GM12878 (cell line): ENCODE measurements at regions of chr1 and their contacts with region 1.

Region 1: GRCh38 chr1:55284852-55285251 is 69.7 kb upstream of the USP24 start:
- DNase-seq: peak; percentile 5
- ATAC-seq: no peak
- H3K4me3 ChIP-seq: no peak overlapping the region
- H3K27ac ChIP-seq: no peak overlapping the region
- H3K4me1 ChIP-seq: peaks cover 18% of the 10 kb centered on the region
- H3K27me3 ChIP-seq: no peaks in the 10 kb centered on the region; a peak in 1 of 4 replicates
- CTCF ChIP-seq: peak; percentile 43 to 53 (median 49); a peak in 5 of 6 replicates
- EP300 ChIP-seq: no peak
- POLR2A ChIP-seq: no peak
- RAD21 ChIP-seq: peak; percentile 81

Region 2: GRCh38 chr1:55337801-55338447 is 53.1 kb after region 1 on chr1:
- CTCF ChIA-PET with region 1: interaction called, 138 read pairs
- POLR2A ChIA-PET with region 1: no interaction called
- RAD21 ChIA-PET with region 1: interaction called, 29 read pairs
- SMC1A ChIA-PET with region 1: interaction called, 40 read pairs
- in situ Hi-C with region 1: no loop called
- intact Hi-C with region 1: loop called (anchors 1 kb)
- DNase-seq: peak; percentile 13
- ATAC-seq: peak; percentile 95
- H3K4me3 ChIP-seq: no peak overlapping the region
- H3K27ac ChIP-seq: no peak overlapping the region
- H3K4me1 ChIP-seq: no peaks in the 10 kb centered on the region
- H3K27me3 ChIP-seq: peaks cover 0 to 1% of the 10 kb centered on the region in 2 experiments; a peak in 1 of 4 replicates
- CTCF ChIP-seq: peak; percentile 57 to 62 (median 57)
- EP300 ChIP-seq: no peak
- POLR2A ChIP-seq: no peak
- RAD21 ChIP-seq: peak; percentile 69

Region 3: GRCh38 chr1:55478742-55479141 is 193.9 kb after region 1 on chr1:
- CTCF ChIA-PET with region 1: interaction called, 7 read pairs
- POLR2A ChIA-PET with region 1: no interaction called
- RAD21 ChIA-PET with region 1: interaction called, 4 read pairs
- SMC1A ChIA-PET with region 1: interaction called, 3 read pairs
- in situ Hi-C with region 1: no loop called
- intact Hi-C with region 1: loop called (anchors 10 kb)
- DNase-seq: no peak
- ATAC-seq: peak; percentile 69
- H3K4me3 ChIP-seq: no peak overlapping the region
- H3K27ac ChIP-seq: no peak overlapping the region
- H3K4me1 ChIP-seq: no peaks in the 10 kb centered on the region
- H3K27me3 ChIP-seq: 0 out of 4 replicates have a peak, but pooled peaks cover 0 to 1% of the 10 kb centered on the region in 2 experiments
- CTCF ChIP-seq: peak in 2 of 3 experiments; percentile 7 to 34; a peak in 2 of 6 replicates
- EP300 ChIP-seq: no peak
- POLR2A ChIP-seq: no peak
- RAD21 ChIP-seq: no peak

Region 4: GRCh38 chr1:56709269-56709880 is 1424.5 kb after region 1 on chr1:
- CTCF ChIA-PET with region 1: interaction called, 13 read pairs
- POLR2A ChIA-PET with region 1: no interaction called
- RAD21 ChIA-PET with region 1: interaction called, 4 read pairs
- SMC1A ChIA-PET with region 1: interaction called, 8 read pairs
- in situ Hi-C with region 1: loop called (anchors 5 kb)
- intact Hi-C with region 1: loop called (anchors 2 kb)
- DNase-seq: no peak
- ATAC-seq: peak; percentile 85
- H3K4me3 ChIP-seq: no peak overlapping the region
- H3K27ac ChIP-seq: no peak overlapping the region
- H3K4me1 ChIP-seq: no peaks in the 10 kb centered on the region
- H3K27me3 ChIP-seq: no peaks in the 10 kb centered on the region
- CTCF ChIP-seq: peak; percentile 33 to 57 (median 44); a peak in 4 of 6 replicates
- EP300 ChIP-seq: no peak
- POLR2A ChIP-seq: no peak
- RAD21 ChIP-seq: peak; percentile 45

Region 5: GRCh38 chr1:56821140-56821797 is 1536.4 kb after region 1 on chr1:
- CTCF ChIA-PET with region 1: no interaction called
- POLR2A ChIA-PET with region 1: no interaction called
- RAD21 ChIA-PET with region 1: no interaction called
- SMC1A ChIA-PET with region 1: interaction called, 7 read pairs
- in situ Hi-C with region 1: no loop called
- intact Hi-C with region 1: loop called (anchors 5 kb)
- DNase-seq: no peak
- ATAC-seq: peak; percentile 82
- H3K4me3 ChIP-seq: no peak overlapping the region
- H3K27ac ChIP-seq: no peak overlapping the region
- H3K4me1 ChIP-seq: no peaks in the 10 kb centered on the region
- H3K27me3 ChIP-seq: peaks cover 0 to 1% of the 10 kb centered on the region in 2 experiments; a peak in 2 of 4 replicates
- CTCF ChIP-seq: peak; percentile 68 to 95 (median 95)
- EP300 ChIP-seq: no peak
- POLR2A ChIP-seq: no peak
- RAD21 ChIP-seq: peak; percentile 76